Body of pancreas (tissue), 4 donors: ENCODE measurements at regions of chr22 and their contacts with region 1.

Region 1: GRCh38 chr22:37817705-37818408 is 5.3 kb upstream of the GALR3 start:
- DNase-seq: peak; percentile 87 to 93 (median 90)
- ATAC-seq: peak; percentile 91
- H3K4me3 ChIP-seq: no peak overlapping the region
- H3K27ac ChIP-seq: peak overlapping the region in 3 of 4 donors; percentile 57 to 65 (median 61)
- H3K4me1 ChIP-seq: peaks cover 18% of the 10 kb centered on the region
- H3K27me3 ChIP-seq: no peaks in the 10 kb centered on the region
- CTCF ChIP-seq: peak; percentile 92 to 99 (median 97)
- POLR2A ChIP-seq: peak in 1 of 3 donors; percentile 18

Region 2: GRCh38 chr22:37862570-37863325 is 44.9 kb after region 1 on chr22:
- intact Hi-C with region 1: loop called (anchors 5 kb)
- DNase-seq: peak in 2 of 4 donors; percentile 24 to 57
- ATAC-seq: peak; percentile 28
- H3K4me3 ChIP-seq: no peak overlapping the region
- H3K27ac ChIP-seq: peak overlapping the region in 3 of 4 donors; percentile 32 to 81 (median 78)
- H3K4me1 ChIP-seq: peaks cover 70% of the 10 kb centered on the region
- H3K27me3 ChIP-seq: no peaks in the 10 kb centered on the region
- CTCF ChIP-seq: no peak
- POLR2A ChIP-seq: no peak

Region 3: DNA sequence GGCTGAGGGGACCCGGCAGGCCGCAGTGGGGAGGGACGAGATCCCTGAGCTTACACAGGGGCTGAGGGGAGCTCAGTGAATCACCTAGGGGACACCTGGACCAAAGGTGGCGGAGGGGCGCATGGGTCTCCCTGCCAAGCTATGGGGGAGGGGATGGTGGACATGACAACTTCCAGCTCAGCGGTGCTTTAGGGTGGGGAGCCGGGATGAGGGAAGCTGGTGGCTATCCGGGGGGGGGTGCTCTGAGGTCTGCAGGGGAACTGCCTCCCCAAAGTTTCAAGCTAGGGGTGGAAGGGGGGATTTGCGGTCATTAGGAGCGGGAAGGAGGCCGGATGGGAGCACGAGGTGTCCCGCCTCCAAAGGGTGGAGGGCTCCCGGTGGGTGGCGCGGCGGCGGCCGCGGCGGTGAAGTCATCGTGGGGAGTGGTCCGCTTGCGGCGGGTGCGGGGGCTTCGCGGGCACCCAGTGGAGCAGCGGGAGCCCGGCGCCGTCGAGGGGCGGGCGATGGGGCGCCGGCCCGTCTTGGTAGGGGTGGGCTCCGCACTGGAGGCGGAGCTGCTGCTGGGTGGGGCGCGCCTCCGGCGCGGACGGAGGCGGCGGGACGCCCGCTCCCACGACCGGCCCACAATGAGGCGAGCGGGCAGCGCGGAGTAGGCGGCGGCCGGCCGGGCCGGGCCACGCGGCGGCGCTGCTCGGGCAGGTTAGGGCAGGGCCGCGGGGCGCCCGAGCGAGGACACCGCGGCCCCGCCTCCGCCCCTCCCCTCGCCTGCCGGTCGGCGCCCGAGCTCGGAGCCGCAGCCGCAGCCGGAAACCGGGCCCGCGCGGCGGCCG is 87.9 kb after region 1 on chr22 and contains the start of gene MICALL1:
- intact Hi-C with region 1: no loop called
- DNase-seq: peak; percentile 79 to 87 (median 82)
- ATAC-seq: peak; percentile 92
- H3K4me3 ChIP-seq: peak within 1 kb of the TSS; percentile 54 to 62
- H3K27ac ChIP-seq: peak within 1 kb of the TSS; percentile 25 to 79 (median 78)
- H3K4me1 ChIP-seq: peaks cover 28% of the 10 kb centered on the region
- H3K27me3 ChIP-seq: no peaks in the 10 kb centered on the region
- CTCF ChIP-seq: peak in 4 of 7 experiments; percentile 45 to 93 (median 77)
- POLR2A ChIP-seq: peak in 1 of 3 donors; percentile 35
- total RNA-seq, gene MICALL1: 19.2 to 34.9 TPM